IMR-90 (cell line): ENCODE measurements at regions of chr2 and their contacts with region 1.

Region 1: DNA sequence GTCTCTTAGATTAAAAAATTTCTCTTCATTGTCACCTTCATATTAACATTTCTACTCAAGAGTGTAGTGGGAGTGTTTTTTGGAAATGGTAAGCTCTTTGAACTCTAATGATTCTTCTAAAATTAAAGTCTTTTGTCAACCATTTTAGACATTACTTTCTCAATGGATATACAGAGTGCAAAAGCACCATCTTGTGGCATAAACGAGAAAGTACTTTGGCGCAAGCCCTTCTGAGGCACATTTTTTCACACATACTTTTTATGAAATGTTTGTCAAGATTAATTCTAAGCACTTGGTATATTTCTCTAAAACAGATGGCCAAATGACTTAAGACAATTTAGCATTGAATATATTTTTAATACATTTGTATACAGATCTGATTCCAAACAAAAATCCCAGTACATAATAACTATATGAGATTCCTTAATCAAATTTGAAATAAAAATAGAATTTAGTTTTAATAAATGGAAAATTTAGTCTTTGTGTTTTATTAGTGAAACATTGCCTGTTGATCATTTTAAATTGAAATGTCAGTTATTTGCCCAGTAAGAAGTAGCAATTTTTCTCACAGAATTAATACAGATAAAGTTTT is 63.3 kb upstream of the GALNT5 start:
- DNase-seq: peak; percentile 72
- ATAC-seq: peak; percentile 76
- H3K4me3 ChIP-seq: no peak overlapping the region
- H3K27ac ChIP-seq: no peak overlapping the region; the same call in 1 of the 2 replicates
- H3K4me1 ChIP-seq: peaks cover 5% of the 10 kb centered on the region; the same call in 1 of the 2 replicates
- H3K27me3 ChIP-seq: no peaks in the 10 kb centered on the region
- CTCF ChIP-seq: peak; percentile 86
- POLR2A ChIP-seq: no peak
- RAD21 ChIP-seq: peak; percentile 91

Region 2: DNA sequence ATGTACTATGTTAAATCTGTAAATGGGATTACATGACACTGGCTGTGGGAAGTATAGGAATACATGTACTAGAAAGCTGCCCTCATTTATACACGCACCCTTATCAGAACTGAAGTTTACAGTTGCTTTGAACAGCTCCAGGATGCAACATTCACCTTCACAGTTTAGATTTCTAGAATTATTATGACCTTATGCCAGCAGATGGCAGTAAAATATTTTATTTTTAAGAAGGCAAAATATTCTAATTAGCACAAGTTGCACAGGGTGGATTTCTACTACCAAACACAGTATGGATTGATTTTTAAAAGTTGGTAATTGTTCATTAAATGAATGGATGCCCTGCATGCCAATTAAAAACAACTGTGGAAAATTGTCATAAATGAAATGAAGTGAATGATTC is 1825.3 kb before region 1 on chr2:
- CTCF ChIA-PET with region 1: interaction called, 4 read pairs
- POLR2A ChIA-PET with region 1: no interaction called
- dilution Hi-C with region 1: no loop called
- in situ Hi-C with region 1: no loop called
- intact Hi-C with region 1: loop called (anchors 2 kb)
- DNase-seq: peak; percentile 0
- ATAC-seq: no peak
- H3K4me3 ChIP-seq: no peak overlapping the region
- H3K27ac ChIP-seq: no peak overlapping the region
- H3K4me1 ChIP-seq: no peaks in the 10 kb centered on the region
- H3K27me3 ChIP-seq: no peaks in the 10 kb centered on the region
- CTCF ChIP-seq: peak; percentile 26
- POLR2A ChIP-seq: no peak
- RAD21 ChIP-seq: no peak

Region 3: GRCh38 chr2:155382776-155383175 is 1811.4 kb before region 1 on chr2:
- CTCF ChIA-PET with region 1: interaction called, 6 read pairs
- POLR2A ChIA-PET with region 1: no interaction called
- dilution Hi-C with region 1: no loop called
- in situ Hi-C with region 1: loop called (anchors 10 kb)
- intact Hi-C with region 1: loop called (anchors 1 kb)
- DNase-seq: no peak
- ATAC-seq: no peak
- H3K4me3 ChIP-seq: no peak overlapping the region
- H3K27ac ChIP-seq: no peak overlapping the region
- H3K4me1 ChIP-seq: no peaks in the 10 kb centered on the region
- H3K27me3 ChIP-seq: no peaks in the 10 kb centered on the region
- CTCF ChIP-seq: no peak
- POLR2A ChIP-seq: no peak
- RAD21 ChIP-seq: no peak

Region 4: DNA sequence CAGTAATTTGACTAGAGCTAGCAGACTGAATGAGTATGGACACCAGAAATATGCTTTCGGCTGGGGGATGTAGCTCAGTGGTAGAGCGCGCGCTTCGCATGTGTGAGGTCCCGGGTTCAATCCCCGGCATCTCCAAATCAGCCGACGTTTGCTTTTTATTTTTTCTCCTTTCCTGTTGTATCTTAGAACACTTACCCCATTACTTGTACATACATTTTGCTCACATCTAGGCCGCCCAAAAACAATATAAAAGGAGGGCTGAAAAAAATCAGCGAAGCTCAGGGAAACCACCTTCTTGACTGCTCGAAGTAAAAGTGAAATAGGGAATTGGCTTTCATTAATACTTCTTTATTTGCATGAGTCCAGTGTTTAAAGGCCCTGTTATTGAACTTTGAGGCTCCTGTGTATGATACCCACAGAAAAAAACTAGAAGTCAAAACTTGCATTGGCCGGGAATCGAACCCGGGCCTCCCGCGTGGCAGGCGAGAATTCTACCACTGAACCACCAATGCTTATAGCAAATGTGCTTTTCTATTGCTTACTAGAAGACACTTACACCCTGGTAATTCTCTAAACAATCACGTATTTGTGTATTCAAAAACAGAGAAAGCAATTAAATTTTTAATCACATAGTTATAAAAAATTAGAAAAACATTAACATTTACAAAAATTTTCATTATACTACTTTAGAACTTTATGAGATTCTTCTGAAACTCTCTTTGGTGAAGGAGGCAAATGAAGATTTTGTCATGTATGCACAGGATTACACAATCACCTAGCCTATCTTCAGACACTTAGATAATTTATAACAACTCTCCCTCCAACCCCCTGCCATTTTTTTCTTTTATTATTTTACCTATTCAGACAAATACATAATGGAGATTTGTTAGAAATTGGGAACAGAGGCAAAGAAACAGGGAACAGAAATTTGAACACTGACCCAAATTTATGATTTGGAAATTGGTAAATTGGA is 793.2 kb before region 1 on chr2:
- CTCF ChIA-PET with region 1: no interaction called
- POLR2A ChIA-PET with region 1: no interaction called
- dilution Hi-C with region 1: no loop called
- in situ Hi-C with region 1: no loop called
- intact Hi-C with region 1: loop called (anchors 5 kb)
- DNase-seq: peak; percentile 85
- ATAC-seq: peak; percentile 92
- H3K4me3 ChIP-seq: peak overlapping the region; percentile 55
- H3K27ac ChIP-seq: no peak overlapping the region
- H3K4me1 ChIP-seq: peaks cover 5% of the 10 kb centered on the region
- H3K27me3 ChIP-seq: peaks cover 8% of the 10 kb centered on the region; the same call in 1 of the 2 replicates
- CTCF ChIP-seq: no peak
- POLR2A ChIP-seq: no peak
- RAD21 ChIP-seq: no peak

Region 5: DNA sequence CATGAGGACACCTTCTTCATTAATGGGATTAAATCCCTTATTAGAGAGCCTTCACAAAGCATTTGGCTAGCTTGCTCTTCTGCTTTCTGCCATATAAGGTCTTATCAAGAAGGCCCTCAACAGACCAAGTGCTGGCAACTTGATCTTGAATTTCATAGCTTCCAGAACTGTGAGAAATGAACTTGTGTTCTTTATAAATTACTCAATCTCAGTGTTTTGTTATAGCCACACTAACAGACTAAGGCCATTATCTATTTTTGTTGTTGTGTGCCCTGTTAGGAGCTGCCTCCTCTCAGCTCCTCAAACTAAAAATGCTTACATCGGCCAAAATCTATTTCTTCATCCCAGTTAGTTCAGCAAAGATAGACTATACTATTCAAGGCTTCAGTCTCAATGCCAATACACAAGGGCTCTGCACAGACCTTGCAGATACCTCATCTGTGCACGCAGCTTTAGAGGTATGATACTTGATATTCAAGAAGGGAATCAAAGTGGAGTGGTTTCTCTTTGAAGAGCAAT is 575.1 kb before region 1 on chr2:
- CTCF ChIA-PET with region 1: no interaction called
- POLR2A ChIA-PET with region 1: interaction called, 14 read pairs
- dilution Hi-C with region 1: no loop called
- in situ Hi-C with region 1: no loop called
- intact Hi-C with region 1: no loop called
- DNase-seq: no peak
- ATAC-seq: no peak
- H3K4me3 ChIP-seq: no peak overlapping the region
- H3K27ac ChIP-seq: no peak overlapping the region
- H3K4me1 ChIP-seq: no peaks in the 10 kb centered on the region
- H3K27me3 ChIP-seq: no peaks in the 10 kb centered on the region
- CTCF ChIP-seq: no peak
- POLR2A ChIP-seq: no peak
- RAD21 ChIP-seq: no peak

Region 6: DNA sequence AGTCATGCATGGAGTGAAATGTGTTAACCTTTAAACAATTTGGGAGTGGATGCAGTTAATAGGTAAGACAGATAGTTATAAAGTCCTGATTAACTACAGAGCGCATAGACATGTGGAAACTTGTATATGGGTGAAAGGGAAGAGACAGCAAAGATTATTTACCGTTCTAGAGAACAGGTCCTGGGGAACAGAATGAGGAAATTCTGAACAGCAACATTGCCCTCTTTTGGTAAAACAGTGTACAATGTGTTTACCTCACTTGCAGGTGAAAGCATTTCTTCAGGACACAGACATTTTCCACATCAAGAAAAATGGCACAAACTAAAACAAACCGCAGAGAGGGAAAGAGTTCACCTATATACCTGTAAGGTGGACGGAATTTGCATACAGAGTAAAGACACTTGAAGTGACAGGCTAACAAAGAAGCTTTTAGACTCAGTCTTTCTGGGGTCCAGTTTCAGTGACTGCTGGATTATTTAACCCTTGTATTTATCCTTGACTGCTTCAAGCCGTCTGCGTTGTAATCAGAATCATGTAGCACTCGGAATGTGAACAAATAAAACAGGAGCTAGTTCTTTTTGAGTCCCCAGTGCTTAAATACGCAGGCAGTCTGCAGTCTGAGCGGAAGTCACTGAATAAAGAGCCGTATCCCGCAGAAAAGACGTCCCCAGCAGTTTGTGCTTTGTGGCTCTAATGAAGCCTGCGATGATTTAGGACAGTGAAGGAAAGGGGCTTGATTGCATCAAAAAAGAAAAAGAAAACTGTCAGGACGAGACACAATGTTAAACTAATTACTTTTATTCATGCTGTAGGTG is 301.5 kb before region 1 on chr2:
- CTCF ChIA-PET with region 1: no interaction called
- POLR2A ChIA-PET with region 1: no interaction called
- dilution Hi-C with region 1: no loop called
- in situ Hi-C with region 1: loop called (anchors 10 kb)
- intact Hi-C with region 1: loop called (anchors 5 kb)
- DNase-seq: peak; percentile 60
- ATAC-seq: peak; percentile 79
- H3K4me3 ChIP-seq: peak overlapping the region; percentile 20
- H3K27ac ChIP-seq: no peak overlapping the region
- H3K4me1 ChIP-seq: no peaks in the 10 kb centered on the region
- H3K27me3 ChIP-seq: no peaks in the 10 kb centered on the region
- CTCF ChIP-seq: peak; percentile 46
- POLR2A ChIP-seq: no peak
- RAD21 ChIP-seq: peak; percentile 56

Region 7: DNA sequence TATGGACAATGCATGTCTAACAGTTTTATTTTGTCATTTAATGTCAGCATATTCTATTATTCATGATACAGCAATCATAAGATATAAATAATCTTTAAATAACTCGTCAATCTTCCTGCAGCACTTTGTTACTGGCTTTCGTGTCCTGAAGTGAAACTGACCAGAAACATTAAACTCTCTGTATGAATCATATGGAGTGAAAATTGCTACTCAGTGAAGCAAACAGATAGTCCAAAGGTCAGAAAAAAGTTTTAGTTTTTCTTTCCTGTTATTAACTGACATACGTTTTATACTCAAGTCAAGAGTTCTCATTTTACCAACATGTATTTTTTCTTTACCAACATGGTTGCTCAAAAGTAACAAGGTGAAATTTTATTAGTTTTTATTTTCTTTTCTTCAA is 43.4 kb before region 1 on chr2:
- CTCF ChIA-PET with region 1: no interaction called
- POLR2A ChIA-PET with region 1: no interaction called
- dilution Hi-C with region 1: no loop called
- in situ Hi-C with region 1: no loop called
- intact Hi-C with region 1: no loop called
- DNase-seq: peak; percentile 74
- ATAC-seq: peak; percentile 74
- H3K4me3 ChIP-seq: no peak overlapping the region
- H3K27ac ChIP-seq: peak overlapping the region; percentile 85; the same call in 1 of the 2 replicates
- H3K4me1 ChIP-seq: peaks cover 15% of the 10 kb centered on the region
- H3K27me3 ChIP-seq: no peaks in the 10 kb centered on the region
- CTCF ChIP-seq: no peak
- POLR2A ChIP-seq: no peak
- RAD21 ChIP-seq: no peak

Region 8: GRCh38 chr2:157168501-157168900 is 25.7 kb before region 1 on chr2:
- CTCF ChIA-PET with region 1: no interaction called
- POLR2A ChIA-PET with region 1: no interaction called
- dilution Hi-C with region 1: no loop called
- in situ Hi-C with region 1: no loop called
- intact Hi-C with region 1: no loop called
- DNase-seq: peak; percentile 47
- ATAC-seq: no peak
- H3K4me3 ChIP-seq: no peak overlapping the region
- H3K27ac ChIP-seq: no peak overlapping the region
- H3K4me1 ChIP-seq: peaks cover 11% of the 10 kb centered on the region
- H3K27me3 ChIP-seq: no peaks in the 10 kb centered on the region
- CTCF ChIP-seq: no peak
- POLR2A ChIP-seq: no peak
- RAD21 ChIP-seq: no peak

Region 9: DNA sequence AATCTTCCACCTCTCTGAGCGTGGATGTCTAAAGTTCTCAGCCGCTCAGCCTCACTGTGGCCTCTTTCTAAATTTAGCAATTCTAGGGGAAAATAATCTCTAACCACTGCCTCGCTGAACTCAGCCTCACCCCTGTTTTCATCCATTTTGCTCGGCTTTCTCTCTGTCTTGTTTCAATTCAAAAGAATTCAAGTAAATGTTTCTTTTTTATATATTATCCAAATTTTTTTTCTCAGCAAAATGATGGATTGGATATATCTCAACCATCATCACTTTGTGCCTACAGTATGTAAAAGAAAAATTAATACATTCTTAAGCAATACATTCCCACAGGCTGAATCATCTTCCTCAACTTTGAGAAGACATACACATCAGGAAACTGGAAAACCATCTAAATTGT is 39.3 kb after region 1 on chr2:
- CTCF ChIA-PET with region 1: no interaction called
- POLR2A ChIA-PET with region 1: no interaction called
- dilution Hi-C with region 1: no loop called
- in situ Hi-C with region 1: no loop called
- intact Hi-C with region 1: no loop called
- DNase-seq: peak; percentile 84
- ATAC-seq: peak; percentile 56
- H3K4me3 ChIP-seq: no peak overlapping the region
- H3K27ac ChIP-seq: peak overlapping the region; percentile 84; the same call in 1 of the 2 replicates
- H3K4me1 ChIP-seq: peaks cover 17% of the 10 kb centered on the region
- H3K27me3 ChIP-seq: no peaks in the 10 kb centered on the region
- CTCF ChIP-seq: no peak
- POLR2A ChIP-seq: no peak
- RAD21 ChIP-seq: no peak

Region 10: GRCh38 chr2:157257312-157258252 is 63.4 kb after region 1 on chr2 and contains the start of gene GALNT5:
- CTCF ChIA-PET with region 1: no interaction called
- POLR2A ChIA-PET with region 1: interaction called, 4 read pairs
- dilution Hi-C with region 1: no loop called
- in situ Hi-C with region 1: no loop called
- intact Hi-C with region 1: loop called (anchors 2 kb)
- DNase-seq: peak; percentile 74
- ATAC-seq: peak; percentile 69
- H3K4me3 ChIP-seq: peak within 1 kb of the TSS; percentile 66
- H3K27ac ChIP-seq: peak within 1 kb of the TSS; percentile 97
- H3K4me1 ChIP-seq: peaks cover 18% of the 10 kb centered on the region
- H3K27me3 ChIP-seq: no peaks in the 10 kb centered on the region
- CTCF ChIP-seq: no peak
- POLR2A ChIP-seq: peak; percentile 42; the same call in 1 of the 2 replicates
- RAD21 ChIP-seq: no peak
- total RNA-seq, gene GALNT5: 63.3 and 73.6 TPM in 2 replicates